Right cardiac atrium (tissue), 5 donors: ENCODE measurements at regions of chr15 and their contacts with region 1.

Region 1: DNA sequence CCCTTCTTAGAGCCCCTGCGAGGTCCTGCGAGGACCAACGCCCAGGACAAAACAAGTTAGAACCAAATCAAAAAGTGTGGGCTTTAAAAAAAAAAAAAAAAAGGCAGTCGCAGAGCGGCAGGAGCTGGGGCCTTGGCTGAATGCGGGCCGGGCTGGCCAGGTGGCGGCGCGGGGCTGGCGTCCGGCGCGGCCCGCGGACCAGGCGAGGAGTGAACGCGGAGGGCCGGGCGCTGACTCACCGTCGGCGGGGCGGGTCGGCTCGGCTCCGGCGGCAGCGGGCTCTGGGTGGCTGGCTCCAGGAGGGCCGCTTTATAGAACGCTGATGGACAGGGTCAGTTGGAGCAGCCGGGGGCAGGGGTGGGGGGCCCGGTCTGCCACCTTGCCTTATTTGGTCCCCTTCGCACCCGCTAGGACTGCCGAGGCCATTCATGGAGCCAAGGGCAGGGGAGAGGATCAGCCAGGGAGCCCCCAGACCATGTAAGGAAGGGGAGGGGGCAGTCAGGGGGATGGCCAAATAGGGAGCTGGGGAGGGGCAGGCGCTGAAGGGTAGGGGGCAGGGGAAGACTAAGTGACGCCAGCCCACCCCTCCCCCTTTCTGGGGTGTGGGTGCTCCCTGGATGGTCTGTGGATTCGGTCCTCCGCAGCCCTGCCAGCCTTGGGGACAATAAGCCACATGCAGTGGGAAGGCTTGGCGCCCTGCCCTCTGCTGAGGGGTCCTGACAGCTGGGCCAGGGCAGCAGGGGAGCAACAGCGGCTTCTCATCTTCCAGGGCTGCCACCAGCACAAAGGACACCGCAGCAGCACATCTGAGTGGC is at the start of gene ACTC1:
- DNase-seq: peak; percentile 66 to 88 (median 87)
- ATAC-seq: peak; percentile 59 to 67
- H3K4me3 ChIP-seq: peak within 1 kb of the TSS; percentile 45
- H3K27ac ChIP-seq: peak within 1 kb of the TSS; percentile 96
- H3K4me1 ChIP-seq: peaks cover 7% of the 10 kb centered on the region
- H3K27me3 ChIP-seq: no peaks in the 10 kb centered on the region
- total RNA-seq, gene ACTC1: 9,200 to 14,744 (median 13,223) TPM

Region 2: GRCh38 chr15:34721802-34722795 is 73.4 kb before region 1 on chr15:
- intact Hi-C with region 1: loop called in 1 of 4 experiments (anchors 5 kb)
- DNase-seq: peak; percentile 79 to 90 (median 89)
- ATAC-seq: peak; percentile 94 to 95
- H3K4me3 ChIP-seq: peak overlapping the region; percentile 24
- H3K27ac ChIP-seq: peak overlapping the region; percentile 66
- H3K4me1 ChIP-seq: peaks cover 10% of the 10 kb centered on the region
- H3K27me3 ChIP-seq: no peaks in the 10 kb centered on the region

Region 3: DNA sequence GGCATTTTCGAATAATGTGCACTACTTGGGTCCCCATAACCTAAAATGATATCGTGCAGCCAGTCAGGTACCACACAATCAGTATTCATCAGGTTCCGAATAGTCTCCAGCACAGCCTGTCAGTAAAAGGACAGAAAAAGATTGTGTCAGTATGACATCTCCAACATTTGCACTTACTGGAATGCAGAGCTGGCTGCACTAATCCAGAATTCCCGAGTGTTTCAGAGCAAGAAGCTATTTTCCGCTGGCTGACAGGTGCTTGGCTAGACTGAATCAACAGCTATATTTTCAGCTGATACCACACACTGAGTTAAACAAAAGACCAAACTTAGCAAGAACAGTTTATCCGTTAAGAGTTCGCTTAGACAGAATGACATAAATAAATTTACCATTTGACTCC is 105.3 kb after region 1 on chr15:
- intact Hi-C with region 1: loop called in 1 of 4 experiments (anchors 10 kb)
- DNase-seq: no peak
- ATAC-seq: peak; percentile 62 to 78
- H3K4me3 ChIP-seq: no peak overlapping the region
- H3K27ac ChIP-seq: peak overlapping the region; percentile 30
- H3K4me1 ChIP-seq: no peaks in the 10 kb centered on the region
- H3K27me3 ChIP-seq: no peaks in the 10 kb centered on the region